ENCODE measurements at regions of chr2 and their contacts with region 1.

Region 1: GRCh38 chr2:143949121-143949848 is 570.6 kb downstream of the ZEB2 start:
- DNase-seq: no peak
- ATAC-seq: peak; percentile 39
- H3K4me3 Mint-ChIP-seq: no peak overlapping the region
- H3K27ac Mint-ChIP-seq: no peak overlapping the region
- H3K4me1 Mint-ChIP-seq: no peaks in the 10 kb centered on the region
- H3K27me3 Mint-ChIP-seq: no peaks in the 10 kb centered on the region

Region 2: DNA sequence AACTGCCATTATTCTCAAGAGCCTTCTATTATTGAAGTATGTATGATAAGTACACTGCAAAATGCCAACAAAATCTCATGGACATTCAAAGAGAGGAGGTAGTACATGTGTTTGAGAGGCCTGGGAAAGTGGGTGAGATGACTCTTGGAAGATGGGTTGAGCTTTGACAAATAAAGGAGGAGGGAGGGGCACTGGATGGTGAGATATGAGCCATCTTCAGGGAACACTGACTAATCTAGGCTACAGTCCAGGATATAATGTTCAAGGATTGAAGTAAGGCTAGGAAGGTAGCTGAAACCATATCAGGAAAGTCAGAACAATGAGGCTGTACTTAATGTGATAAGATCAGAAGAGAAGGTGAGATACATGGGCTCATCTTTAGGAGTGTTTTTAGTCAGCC is 10.9 kb after region 1 on chr2:
- CTCF ChIA-PET with region 1: interaction called, 13 read pairs
- POLR2A ChIA-PET with region 1: no interaction called
- intact Hi-C with region 1: no loop called
- DNase-seq: no peak
- ATAC-seq: no peak
- H3K4me3 Mint-ChIP-seq: no peak overlapping the region
- H3K27ac Mint-ChIP-seq: no peak overlapping the region
- H3K4me1 Mint-ChIP-seq: no peaks in the 10 kb centered on the region
- H3K27me3 Mint-ChIP-seq: no peaks in the 10 kb centered on the region

Measured in activated CD4-positive, alpha-beta T cell treated with anti-CD3 and anti-CD28 coated beads for 36 hours (primary cell).